A673 (cell line): ENCODE measurements at regions of chr4 and their contacts with region 1.

Region 1: GRCh38 chr4:139450586-139450985 is 3.3 kb upstream of the RAB33B start:
- DNase-seq: no peak
- H3K4me3 ChIP-seq: no peak overlapping the region
- H3K27ac ChIP-seq: no peak overlapping the region
- H3K4me1 ChIP-seq: no peaks in the 10 kb centered on the region
- H3K27me3 ChIP-seq: no peaks in the 10 kb centered on the region
- CTCF ChIP-seq: no peak

Region 2: DNA sequence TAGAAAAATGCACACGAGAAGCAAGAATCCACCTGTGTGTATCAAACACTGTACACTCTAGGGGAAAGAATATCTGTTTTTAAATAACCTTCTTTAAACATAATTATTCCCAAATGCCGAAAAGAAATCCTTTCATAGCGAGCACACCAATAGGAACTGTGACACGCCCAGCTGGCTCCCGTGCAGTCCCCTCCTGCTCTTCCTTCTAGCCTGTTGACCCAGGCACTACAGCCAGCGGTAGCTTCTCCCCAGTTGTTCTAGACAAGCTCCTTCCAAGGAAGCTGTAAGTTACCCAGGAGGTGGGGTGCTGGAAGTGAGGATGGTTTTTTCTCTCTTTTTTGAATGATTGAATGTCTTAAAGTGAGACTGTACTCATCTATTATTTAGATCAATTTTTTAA is 454.5 kb before region 1 on chr4:
- CTCF ChIA-PET with region 1: no interaction called
- POLR2A ChIA-PET with region 1: no interaction called
- intact Hi-C with region 1: no loop called
- DNase-seq: no peak
- H3K4me3 ChIP-seq: no peak overlapping the region
- H3K27ac ChIP-seq: no peak overlapping the region
- H3K4me1 ChIP-seq: no peaks in the 10 kb centered on the region
- H3K27me3 ChIP-seq: no peaks in the 10 kb centered on the region
- CTCF ChIP-seq: no peak

Region 3: DNA sequence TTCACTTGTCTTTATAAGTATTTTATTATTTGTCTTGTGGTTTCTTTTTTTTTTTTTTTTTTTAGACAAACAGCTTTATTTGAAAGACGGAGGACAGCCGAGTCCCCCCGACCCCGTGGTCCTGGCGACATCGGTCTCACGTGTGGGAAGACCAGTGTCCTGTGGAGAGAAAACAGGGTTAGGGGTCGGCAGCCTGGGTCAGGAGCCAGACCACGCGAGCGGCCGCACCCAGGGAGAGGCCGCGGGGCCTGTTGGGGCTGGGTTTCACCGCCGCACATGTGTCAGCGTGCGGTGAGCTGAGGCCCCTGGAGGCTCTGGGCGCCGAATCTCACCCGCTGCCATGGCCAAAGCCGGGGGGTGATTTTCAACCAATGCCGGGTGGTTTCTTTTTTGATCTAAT is 14.5 kb before region 1 on chr4:
- CTCF ChIA-PET with region 1: no interaction called
- POLR2A ChIA-PET with region 1: interaction called, 12 read pairs
- intact Hi-C with region 1: no loop called
- DNase-seq: no peak
- H3K4me3 ChIP-seq: no peak overlapping the region
- H3K27ac ChIP-seq: no peak overlapping the region
- H3K4me1 ChIP-seq: no peaks in the 10 kb centered on the region
- H3K27me3 ChIP-seq: no peaks in the 10 kb centered on the region
- CTCF ChIP-seq: no peak

Region 4: GRCh38 chr4:139484783-139485318 is 34.3 kb after region 1 on chr4:
- CTCF ChIA-PET with region 1: no interaction called
- POLR2A ChIA-PET with region 1: no interaction called
- intact Hi-C with region 1: no loop called
- DNase-seq: no peak
- H3K4me3 ChIP-seq: no peak overlapping the region
- H3K27ac ChIP-seq: no peak overlapping the region
- H3K4me1 ChIP-seq: no peaks in the 10 kb centered on the region
- H3K27me3 ChIP-seq: no peaks in the 10 kb centered on the region
- CTCF ChIP-seq: no peak

Region 5: DNA sequence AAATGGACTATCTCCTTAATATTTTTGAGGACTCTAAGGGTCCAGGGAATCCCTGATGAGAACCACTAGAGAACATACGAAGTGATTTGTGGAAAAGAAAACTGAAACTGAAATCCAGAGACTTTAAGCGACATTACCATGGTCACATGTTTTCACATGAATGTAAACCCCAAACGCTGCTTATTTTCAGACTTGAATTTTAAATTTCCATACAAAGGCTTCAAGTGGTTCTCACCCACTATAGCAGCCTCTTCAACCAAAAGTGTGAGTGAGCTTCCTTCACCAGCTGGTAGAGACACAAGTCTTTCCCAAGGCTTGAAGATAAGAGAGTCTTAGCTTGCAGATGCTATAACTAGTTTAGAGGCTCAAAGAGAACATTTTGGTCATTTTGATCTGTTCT is 447.7 kb after region 1 on chr4:
- CTCF ChIA-PET with region 1: no interaction called
- POLR2A ChIA-PET with region 1: no interaction called
- intact Hi-C with region 1: no loop called
- DNase-seq: no peak
- H3K4me3 ChIP-seq: no peak overlapping the region
- H3K27ac ChIP-seq: no peak overlapping the region
- H3K4me1 ChIP-seq: no peaks in the 10 kb centered on the region
- H3K27me3 ChIP-seq: no peaks in the 10 kb centered on the region
- CTCF ChIP-seq: no peak

Region 6: GRCh38 chr4:140277576-140277975 is 827.0 kb after region 1 on chr4:
- CTCF ChIA-PET with region 1: no interaction called
- POLR2A ChIA-PET with region 1: no interaction called
- intact Hi-C with region 1: no loop called
- DNase-seq: no peak
- H3K4me3 ChIP-seq: no peak overlapping the region
- H3K27ac ChIP-seq: no peak overlapping the region
- H3K4me1 ChIP-seq: no peaks in the 10 kb centered on the region
- H3K27me3 ChIP-seq: peaks cover under 1% of the 10 kb centered on the region
- CTCF ChIP-seq: no peak